CD8-positive, alpha-beta memory T cell (primary cell): ENCODE measurements at regions of chr16 and their contacts with region 1.

Region 1: DNA sequence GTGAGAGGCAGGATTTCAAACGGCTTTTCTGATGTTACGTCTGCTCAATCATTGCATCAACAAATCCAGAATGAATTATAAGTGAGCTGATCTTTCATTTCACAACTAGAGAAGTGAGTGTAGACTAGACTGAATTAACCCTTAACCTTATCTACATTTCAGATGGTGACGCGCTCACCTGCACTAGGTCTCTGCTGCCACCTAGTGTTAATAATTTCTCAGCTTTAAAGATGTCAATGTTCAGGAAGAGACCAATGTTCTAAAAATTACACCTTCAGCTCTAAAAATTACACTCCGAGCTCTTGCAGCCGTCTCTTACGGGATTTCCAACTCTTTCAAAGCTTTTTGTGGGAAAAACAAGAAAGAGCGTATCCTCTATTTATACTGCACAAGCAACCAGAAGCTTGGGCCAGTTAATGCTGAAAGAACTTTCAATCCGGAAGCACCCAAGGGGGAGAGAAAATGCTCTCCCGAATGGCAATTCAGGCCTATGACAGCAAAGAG is 88.2 kb upstream of the FA2H start:
- DNase-seq: peak in 2 of 5 donors; percentile 8 to 14
- H3K4me3 ChIP-seq: no peak overlapping the region
- H3K4me3 Mint-ChIP-seq: no peak overlapping the region
- H3K27ac ChIP-seq: no peak overlapping the region
- H3K27ac Mint-ChIP-seq: no peak overlapping the region
- H3K4me1 ChIP-seq: peaks cover 5% of the 10 kb centered on the region
- H3K4me1 Mint-ChIP-seq: peaks cover 4 to 8% (median 7%) of the 10 kb centered on the region in 3 donors
- H3K27me3 ChIP-seq: no peaks in the 10 kb centered on the region
- H3K27me3 Mint-ChIP-seq: peaks cover 1 to 7% of the 10 kb centered on the region in 2 donors

Region 2: GRCh38 chr16:74709441-74709877 is 153.3 kb before region 1 on chr16:
- CTCF ChIA-PET with region 1: interaction called, 41 read pairs
- POLR2A ChIA-PET with region 1: no interaction called
- DNase-seq: peak; percentile 67 to 85 (median 70)
- H3K4me3 ChIP-seq: no peak overlapping the region
- H3K4me3 Mint-ChIP-seq: no peak overlapping the region
- H3K27ac ChIP-seq: no peak overlapping the region
- H3K27ac Mint-ChIP-seq: peak overlapping the region in 6 of 8 donors; percentile 17 to 81 (median 68)
- H3K4me1 ChIP-seq: no peaks in the 10 kb centered on the region
- H3K4me1 Mint-ChIP-seq: peaks cover 0 to 6% (median 2%) of the 10 kb centered on the region in 3 donors
- H3K27me3 ChIP-seq: no peaks in the 10 kb centered on the region
- H3K27me3 Mint-ChIP-seq: peaks cover 0 to 3% of the 10 kb centered on the region in 2 donors

Region 3: DNA sequence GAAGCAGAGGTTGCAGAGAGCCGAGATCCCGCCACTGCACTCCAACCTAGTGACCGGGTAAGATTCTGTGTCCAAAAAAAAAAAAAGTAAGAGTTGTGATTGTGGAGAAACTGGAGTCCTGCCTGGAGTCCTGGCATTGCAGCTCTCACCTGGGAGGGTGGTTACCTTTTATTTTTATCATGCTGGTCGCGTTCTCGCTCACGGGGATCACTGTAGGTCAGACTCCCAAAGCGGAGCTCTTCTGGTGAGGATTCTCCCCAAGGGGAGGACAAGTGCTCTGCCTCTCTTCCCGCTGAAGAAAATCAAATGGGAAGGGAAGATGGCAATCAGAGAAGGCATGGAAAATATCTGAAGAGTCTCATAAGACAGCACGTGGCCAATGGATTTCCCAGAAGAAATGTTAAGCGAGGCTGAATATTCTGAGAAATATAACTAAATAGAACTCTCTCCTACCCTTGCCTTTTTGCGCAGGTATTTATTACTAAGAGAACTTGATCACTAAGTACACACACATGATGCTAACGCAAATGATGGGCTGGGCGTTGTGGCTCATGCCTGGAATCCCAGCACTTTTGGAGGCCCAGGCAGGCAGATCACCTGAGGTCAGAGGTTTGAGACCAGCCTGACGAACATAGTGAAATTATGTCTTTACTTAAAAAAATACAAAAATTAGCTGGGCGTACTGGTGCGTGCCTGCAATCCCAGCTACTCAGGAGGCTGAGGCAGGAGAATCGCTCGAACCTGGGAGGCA is 23.5 kb after region 1 on chr16:
- CTCF ChIA-PET with region 1: no interaction called
- POLR2A ChIA-PET with region 1: no interaction called
- DNase-seq: no peak
- H3K4me3 ChIP-seq: no peak overlapping the region
- H3K4me3 Mint-ChIP-seq: no peak overlapping the region
- H3K27ac ChIP-seq: no peak overlapping the region
- H3K27ac Mint-ChIP-seq: peak overlapping the region in 1 of 8 donors; percentile 94
- H3K4me1 ChIP-seq: no peaks in the 10 kb centered on the region
- H3K4me1 Mint-ChIP-seq: peaks cover 8 to 30% (median 14%) of the 10 kb centered on the region in 3 donors
- H3K27me3 ChIP-seq: no peaks in the 10 kb centered on the region
- H3K27me3 Mint-ChIP-seq: no peaks in the 10 kb centered on the region